ENCODE measurements at regions of chr15 and their contacts with region 1.

Region 1: GRCh38 chr15:74776821-74777768 is 4.8 kb upstream of the CSK start:
- DNase-seq: no peak
- H3K4me3 ChIP-seq: no peak overlapping the region
- H3K4me1 ChIP-seq: peaks cover 30% of the 10 kb centered on the region
- H3K27me3 ChIP-seq: no peaks in the 10 kb centered on the region

Region 2: GRCh38 chr15:74373731-74374647 is 403.1 kb before region 1 on chr15:
- in situ Hi-C with region 1: loop called (anchors 5 kb)
- DNase-seq: peak; percentile 99 to 100
- H3K4me3 ChIP-seq: peak overlapping the region; percentile 47
- H3K4me1 ChIP-seq: peaks cover 15% of the 10 kb centered on the region
- H3K27me3 ChIP-seq: peaks cover 28% of the 10 kb centered on the region

Region 3: GRCh38 chr15:74842581-74843444 is 65.7 kb after region 1 on chr15 and contains the start of gene ULK3:
- in situ Hi-C with region 1: no loop called
- DNase-seq: peak; percentile 96 to 98
- H3K4me3 ChIP-seq: peak within 1 kb of the TSS; percentile 89
- H3K4me1 ChIP-seq: peaks cover 17% of the 10 kb centered on the region
- H3K27me3 ChIP-seq: no peaks in the 10 kb centered on the region

Region 4: DNA sequence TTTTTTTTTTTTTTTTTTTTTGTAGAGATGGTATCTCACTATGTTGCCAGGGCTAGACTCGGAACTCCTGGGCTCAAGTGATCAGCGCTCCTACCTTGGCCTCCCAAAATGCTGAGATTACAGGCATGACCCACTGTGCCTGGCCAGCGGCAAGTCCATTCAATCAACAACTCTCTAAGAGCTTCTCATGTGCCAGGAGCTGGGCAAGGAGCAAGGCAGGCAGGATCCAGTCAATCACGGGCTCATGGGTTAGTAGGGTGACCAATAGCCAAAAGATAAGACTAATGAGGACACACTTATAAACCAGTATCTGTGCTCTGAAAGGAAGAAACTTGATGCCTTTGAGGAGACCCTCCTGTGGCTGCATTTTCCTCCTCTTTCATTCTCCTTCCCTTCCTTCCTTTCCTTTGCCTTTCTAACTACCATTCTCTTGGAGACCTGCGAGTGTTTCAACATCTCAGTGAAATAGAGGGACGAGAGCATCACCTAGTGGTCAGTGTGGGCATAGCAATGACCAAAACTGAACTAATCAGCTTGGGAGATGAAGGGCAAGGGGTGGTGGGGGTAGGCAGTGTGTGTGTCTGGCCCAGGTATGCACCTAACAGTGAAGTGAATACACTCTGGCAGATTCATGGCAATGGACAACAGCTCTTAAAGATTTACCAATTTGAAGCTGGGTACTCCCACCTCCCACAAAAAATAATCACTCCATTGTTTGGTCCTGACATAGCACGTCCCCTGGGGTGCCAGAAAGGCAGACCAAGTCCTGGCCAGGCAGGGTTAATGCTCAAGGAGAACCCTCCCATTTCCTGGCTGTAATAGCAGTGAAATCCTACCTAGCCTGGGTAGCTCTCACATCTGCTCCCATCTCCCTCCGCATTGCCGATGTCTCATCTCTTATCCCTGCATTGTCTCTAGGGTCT is 173.2 kb after region 1 on chr15:
- in situ Hi-C with region 1: loop called (anchors 5 kb)
- DNase-seq: peak; percentile 90 to 94
- H3K4me3 ChIP-seq: no peak overlapping the region
- H3K4me1 ChIP-seq: peaks cover 5% of the 10 kb centered on the region
- H3K27me3 ChIP-seq: no peaks in the 10 kb centered on the region

Region 5: GRCh38 chr15:75201609-75202250 is 424.6 kb after region 1 on chr15 and contains the start of gene C15orf39:
- in situ Hi-C with region 1: loop called (anchors 10 kb)
- DNase-seq: peak; percentile 78 to 88
- H3K4me3 ChIP-seq: peak within 1 kb of the TSS; percentile 96
- H3K4me1 ChIP-seq: peaks cover 25% of the 10 kb centered on the region
- H3K27me3 ChIP-seq: no peaks in the 10 kb centered on the region

Measured in HAP-1 (cell line).